Left colon (tissue), 2 donors: ENCODE measurements at regions of chr6 and their contacts with region 1.

Region 1: GRCh38 chr6:69835414-69836179 is 30.8 kb upstream of the COL19A1 start:
- DNase-seq: no peak
- ATAC-seq: peak; percentile 51

Region 2: GRCh38 chr6:70107852-70108629 is 272.4 kb after region 1 on chr6:
- intact Hi-C with region 1: loop called in 1 of 2 experiments (anchors 5 kb)
- DNase-seq: no peak
- ATAC-seq: no peak